ENCODE measurements at regions of chr12 and their contacts with region 1.

Region 1: GRCh38 chr12:120413901-120414695 is 23.8 kb upstream of the COX6A1 start:
- DNase-seq: peak; percentile 13 to 37
- ATAC-seq: peak; percentile 34 to 93 (median 88)
- H3K4me3 ChIP-seq: no peak overlapping the region
- H3K27ac ChIP-seq: peak overlapping the region; percentile 63 to 88 (median 79)
- H3K4me1 ChIP-seq: peaks cover 0 to 9% (median 0%) of the 10 kb centered on the region in 9 donors
- H3K27me3 ChIP-seq: peaks cover 0 to 4% (median 0%) of the 10 kb centered on the region in 7 donors
- CTCF ChIP-seq: no peak

Region 2: GRCh38 chr12:120276734-120277133 is 137.4 kb before region 1 on chr12:
- intact Hi-C with region 1: no loop called
- DNase-seq: no peak
- ATAC-seq: no peak
- H3K4me3 ChIP-seq: no peak overlapping the region
- H3K27ac ChIP-seq: no peak overlapping the region
- H3K4me1 ChIP-seq: no peaks in the 10 kb centered on the region
- H3K27me3 ChIP-seq: no peaks in the 10 kb centered on the region
- CTCF ChIP-seq: no peak

Region 3: DNA sequence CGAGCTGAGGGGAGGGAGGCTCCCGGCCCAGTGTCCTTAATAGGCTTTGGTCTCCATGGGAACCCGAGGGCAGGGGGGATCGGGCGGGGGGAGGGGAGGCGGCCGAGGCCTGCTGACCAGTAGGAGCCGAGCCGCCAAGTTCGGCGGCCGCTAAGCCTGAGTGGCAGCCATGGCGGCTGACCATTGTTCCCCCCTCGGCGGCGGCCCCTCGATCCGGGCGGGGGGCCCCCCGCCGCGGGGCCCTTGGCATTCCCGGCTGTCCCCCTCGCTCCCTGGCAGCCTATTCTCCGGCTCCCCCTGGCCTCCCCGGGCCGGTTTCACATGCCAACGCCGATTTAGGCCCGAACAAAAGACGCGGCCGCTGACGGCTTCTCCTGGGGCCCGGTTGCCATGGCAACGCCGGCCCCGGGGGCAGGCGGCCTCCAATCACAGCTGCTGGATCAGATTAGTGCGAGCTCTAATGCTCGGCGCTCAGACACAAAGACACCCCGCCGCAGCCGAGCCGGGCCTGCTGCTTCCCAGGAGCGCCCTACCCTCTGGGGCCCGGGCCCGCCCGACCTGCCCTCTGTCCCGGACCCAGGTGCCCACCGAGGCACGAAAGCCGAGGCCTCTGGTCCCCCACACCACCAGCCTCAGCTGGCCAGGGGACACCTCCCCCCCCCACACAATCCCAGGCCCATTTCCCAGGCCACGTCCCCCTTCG is 52.4 kb before region 1 on chr12:
- intact Hi-C with region 1: loop called in 1 of 10 experiments (anchors 10 kb)
- DNase-seq: peak; percentile 56 to 71
- ATAC-seq: peak; percentile 27 to 78 (median 62)
- H3K4me3 ChIP-seq: peak overlapping the region in 9 of 10 donors; percentile 29 to 54 (median 40)
- H3K27ac ChIP-seq: peak overlapping the region in 5 of 10 donors; percentile 26 to 65 (median 53)
- H3K4me1 ChIP-seq: peaks cover 0 to 19% (median 2%) of the 10 kb centered on the region in 9 donors
- H3K27me3 ChIP-seq: peaks cover 0 to 56% (median 4%) of the 10 kb centered on the region in 7 donors
- CTCF ChIP-seq: no peak

Region 4: DNA sequence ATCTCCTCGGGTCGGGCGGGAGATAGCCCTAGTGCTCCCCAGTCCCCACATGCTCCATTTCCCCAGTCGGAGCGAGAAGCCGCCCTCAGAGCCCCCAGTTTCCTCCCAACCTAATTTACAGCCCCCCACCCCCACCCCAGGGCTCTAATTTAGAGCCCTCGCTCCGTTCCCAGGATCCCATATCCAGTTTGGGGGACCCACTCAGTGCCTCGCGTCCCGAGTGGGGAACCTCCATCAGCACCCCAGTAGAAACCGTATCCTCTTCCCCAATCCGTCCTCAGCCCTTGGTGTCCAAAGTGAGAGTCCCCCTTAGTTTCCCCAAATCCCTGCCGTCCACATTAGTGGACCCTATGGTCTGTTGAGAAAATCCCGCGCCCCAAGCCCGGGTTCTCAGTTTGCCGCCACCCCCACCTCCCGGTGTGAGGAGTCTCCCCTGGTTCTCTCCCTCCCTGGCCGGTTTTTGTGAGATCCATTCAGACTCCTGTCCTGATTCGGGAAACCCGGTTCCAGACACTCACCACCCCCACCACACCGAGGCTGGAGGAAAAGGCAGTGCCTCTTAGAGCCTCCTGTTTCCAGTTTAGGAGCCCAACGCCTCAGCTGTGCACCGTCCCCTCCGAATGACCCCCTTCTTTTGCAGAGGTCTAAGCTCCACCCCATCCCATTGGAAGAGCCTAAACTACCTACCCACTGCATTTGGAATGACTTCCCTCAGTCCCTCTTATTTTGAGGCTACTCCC is 44.3 kb before region 1 on chr12:
- intact Hi-C with region 1: loop called in 2 of 10 experiments (anchors 5 to 10 kb)
- DNase-seq: no peak
- ATAC-seq: no peak
- H3K4me3 ChIP-seq: peak overlapping the region; percentile 32 to 69 (median 54)
- H3K27ac ChIP-seq: no peak overlapping the region
- H3K4me1 ChIP-seq: peaks cover 0 to 21% (median 12%) of the 10 kb centered on the region in 9 donors
- H3K27me3 ChIP-seq: peaks cover 0 to 87% (median 46%) of the 10 kb centered on the region in 7 donors
- CTCF ChIP-seq: no peak